ENCODE measurements at regions of chr4 and their contacts with region 1.

Region 1: GRCh38 chr4:119220751-119221150 is 8.2 kb downstream of the USP53 start:
- DNase-seq: no peak
- H3K4me3 ChIP-seq: no peak overlapping the region
- CTCF ChIP-seq: no peak
- POLR2A ChIP-seq: no peak

Region 2: DNA sequence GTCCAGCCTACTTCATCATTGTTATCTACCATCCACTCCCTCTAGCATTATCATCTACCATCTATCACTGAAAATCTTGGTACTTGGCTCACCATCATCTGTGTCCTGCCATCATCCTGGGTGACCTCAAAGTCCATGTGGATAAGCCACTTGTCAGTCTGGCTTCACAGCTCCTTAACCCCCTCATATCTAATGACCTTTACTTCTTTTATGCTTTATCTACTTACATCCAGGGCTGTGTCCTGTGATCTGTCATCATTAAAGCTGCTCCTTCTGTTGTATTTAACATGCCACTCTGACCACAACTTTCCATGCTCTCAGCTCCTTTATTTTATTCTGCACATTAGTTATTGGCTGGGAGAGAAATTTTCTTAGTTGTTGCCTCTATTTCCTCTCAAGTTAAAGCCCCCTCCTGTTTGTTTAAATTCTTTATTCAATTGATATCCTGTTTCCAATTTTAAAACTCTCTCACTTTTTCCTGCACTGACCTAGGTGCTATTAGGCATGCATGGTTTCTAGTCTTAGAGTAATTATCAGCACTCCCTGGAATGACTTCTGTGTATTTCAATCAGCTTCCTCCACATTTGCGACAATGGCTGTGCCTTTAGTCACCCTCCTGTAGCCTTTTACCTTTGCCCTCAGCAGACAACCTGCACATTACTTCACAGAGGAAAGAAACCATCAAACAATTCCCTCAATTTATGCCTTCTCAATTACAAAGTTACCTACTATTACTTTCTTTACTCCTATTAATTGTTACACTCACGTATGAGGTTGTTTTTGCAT is 109.3 kb after region 1 on chr4:
- intact Hi-C with region 1: no loop called
- DNase-seq: no peak
- H3K4me3 ChIP-seq: no peak overlapping the region
- CTCF ChIP-seq: no peak
- POLR2A ChIP-seq: no peak

Region 3: GRCh38 chr4:120630427-120630826 is 1409.7 kb after region 1 on chr4:
- intact Hi-C with region 1: no loop called
- DNase-seq: no peak
- H3K4me3 ChIP-seq: no peak overlapping the region
- CTCF ChIP-seq: no peak
- POLR2A ChIP-seq: no peak

Region 4: GRCh38 chr4:121217351-121217750 is 1996.6 kb after region 1 on chr4:
- intact Hi-C with region 1: loop called (anchors 5 kb)
- DNase-seq: peak in 1 of 2 donors; percentile 22
- H3K4me3 ChIP-seq: no peak overlapping the region
- CTCF ChIP-seq: no peak
- POLR2A ChIP-seq: no peak

Measured in lower leg skin (tissue), 4 donors.